Aorta (tissue), 5 donors: ENCODE measurements at regions of chr9 and their contacts with region 1.

Region 1: DNA sequence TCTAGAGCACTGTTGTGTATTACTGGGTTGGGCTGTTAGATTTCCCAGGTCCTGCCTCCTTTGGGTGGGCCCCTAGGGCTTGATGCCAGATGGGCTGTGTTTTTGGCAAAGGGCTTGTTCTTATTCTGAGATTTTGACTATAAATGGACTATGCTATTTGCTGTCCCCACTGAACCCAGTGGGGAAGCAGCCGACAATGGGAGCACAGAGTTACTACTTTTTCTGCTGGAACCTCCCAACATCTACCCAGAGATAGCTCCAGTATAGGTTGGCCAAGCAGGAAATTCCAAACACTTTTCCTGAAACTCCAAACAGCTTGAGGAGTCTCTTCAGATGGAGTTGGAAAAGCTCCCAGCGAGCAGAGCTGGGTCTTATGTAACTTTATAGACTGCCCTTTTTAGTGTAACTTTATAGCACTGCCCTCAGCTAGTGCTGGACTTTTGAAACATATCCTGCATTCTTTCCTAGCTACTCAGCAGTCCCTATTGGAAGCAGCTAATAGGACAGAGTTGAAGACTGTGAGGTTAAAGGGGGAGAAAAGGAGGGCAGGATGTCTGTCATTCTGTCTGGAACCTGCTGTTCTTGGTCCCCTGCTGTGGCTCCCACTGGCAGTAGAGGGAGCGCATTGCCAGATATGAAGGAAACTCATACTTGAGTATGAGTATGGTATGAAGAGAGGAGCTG is 21.0 kb downstream of the RUSC2 start:
- DNase-seq: peak; percentile 91 to 93
- ATAC-seq: peak; percentile 95
- H3K4me3 ChIP-seq: no peak overlapping the region
- H3K27ac ChIP-seq: peak overlapping the region; percentile 92 to 95
- H3K4me1 ChIP-seq: peaks cover 4 to 10% of the 10 kb centered on the region in 2 donors
- H3K27me3 ChIP-seq: no peaks in the 10 kb centered on the region

Region 2: GRCh38 chr9:35495984-35496383 is 14.9 kb before region 1 on chr9:
- intact Hi-C with region 1: loop called in 1 of 2 experiments (anchors 2 kb)
- DNase-seq: no peak
- ATAC-seq: no peak
- H3K4me3 ChIP-seq: no peak overlapping the region
- H3K27ac ChIP-seq: peak overlapping the region in 1 of 2 donors; percentile 8
- H3K4me1 ChIP-seq: peaks cover 6% of the 10 kb centered on the region in 2 donors
- H3K27me3 ChIP-seq: no peaks in the 10 kb centered on the region

Region 3: GRCh38 chr9:35553670-35554543 is 43.0 kb after region 1 on chr9:
- intact Hi-C with region 1: no loop called
- DNase-seq: peak in 1 of 2 donors; percentile 81
- ATAC-seq: peak; percentile 90
- H3K4me3 ChIP-seq: no peak overlapping the region
- H3K27ac ChIP-seq: peak overlapping the region in 1 of 2 donors; percentile 26
- H3K4me1 ChIP-seq: peaks cover 3 to 4% of the 10 kb centered on the region in 2 donors
- H3K27me3 ChIP-seq: no peaks in the 10 kb centered on the region

Region 4: GRCh38 chr9:35736201-35736633 is 225.3 kb after region 1 on chr9:
- intact Hi-C with region 1: no loop called
- DNase-seq: peak in 1 of 2 donors; percentile 71
- ATAC-seq: no peak
- H3K4me3 ChIP-seq: no peak overlapping the region
- H3K27ac ChIP-seq: no peak overlapping the region
- H3K4me1 ChIP-seq: no peaks in the 10 kb centered on the region
- H3K27me3 ChIP-seq: no peaks in the 10 kb centered on the region